ENCODE measurements at regions of chr15 and their contacts with region 1.

Region 1: DNA sequence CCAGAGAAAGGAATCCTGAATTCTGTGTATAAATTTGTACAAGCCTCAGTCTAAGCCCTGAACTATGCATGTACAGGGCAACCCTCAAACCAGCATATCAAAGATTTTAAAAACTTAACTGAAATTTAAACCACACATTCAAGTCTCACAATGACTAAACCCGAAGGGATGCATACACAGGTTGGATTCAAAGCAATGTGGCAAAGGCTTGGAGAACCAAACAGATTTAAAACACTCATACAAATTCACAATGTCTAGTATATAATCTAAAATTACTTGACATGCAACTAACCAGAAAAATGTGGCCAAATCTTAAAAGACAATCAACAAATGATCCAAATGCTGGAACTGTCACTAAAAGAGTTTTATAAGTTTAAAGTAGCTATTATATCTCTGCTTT is 36.4 kb downstream of the CEP152 start:
- DNase-seq: no peak
- H3K4me3 ChIP-seq: no peak overlapping the region
- CTCF ChIP-seq: no peak

Region 2: GRCh38 chr15:48810414-48811317 is 36.2 kb after region 1 on chr15 and contains the start of gene CEP152:
- in situ Hi-C with region 1: no loop called
- DNase-seq: peak; percentile 99
- H3K4me3 ChIP-seq: peak within 1 kb of the TSS; percentile 96
- CTCF ChIP-seq: no peak

Region 3: GRCh38 chr15:48823237-48823636 is 48.8 kb after region 1 on chr15:
- in situ Hi-C with region 1: loop called (anchors 10 kb)
- DNase-seq: peak; percentile 3
- H3K4me3 ChIP-seq: no peak overlapping the region
- CTCF ChIP-seq: no peak

Measured in astrocyte of the cerebellum (primary cell).